Activated T-helper 1 cell treated with anti-CD3 and anti-CD28 coated beads, Interleukin-12 subunit alpha, Interleukin-12 subunit beta, Interleukin-2, Interleukin-4 antibody, amounts not matched to agents 30 ng/mL and 10 ng/mL and 1 ng/mL, durations not matched to agents 14 hours and 24 hours and 36 hours (primary cell): ENCODE measurements at regions of chr4 and their contacts with region 1.

Region 1: GRCh38 chr4:122922877-122923511 is 597 bp upstream of the NUDT6 start:
- DNase-seq: peak; percentile 90
- H3K4me3 Mint-ChIP-seq: no peak overlapping the region
- H3K27ac Mint-ChIP-seq: peak overlapping the region; percentile 96
- H3K4me1 Mint-ChIP-seq: peaks cover 16% of the 10 kb centered on the region
- H3K27me3 Mint-ChIP-seq: no peaks in the 10 kb centered on the region

Region 2: DNA sequence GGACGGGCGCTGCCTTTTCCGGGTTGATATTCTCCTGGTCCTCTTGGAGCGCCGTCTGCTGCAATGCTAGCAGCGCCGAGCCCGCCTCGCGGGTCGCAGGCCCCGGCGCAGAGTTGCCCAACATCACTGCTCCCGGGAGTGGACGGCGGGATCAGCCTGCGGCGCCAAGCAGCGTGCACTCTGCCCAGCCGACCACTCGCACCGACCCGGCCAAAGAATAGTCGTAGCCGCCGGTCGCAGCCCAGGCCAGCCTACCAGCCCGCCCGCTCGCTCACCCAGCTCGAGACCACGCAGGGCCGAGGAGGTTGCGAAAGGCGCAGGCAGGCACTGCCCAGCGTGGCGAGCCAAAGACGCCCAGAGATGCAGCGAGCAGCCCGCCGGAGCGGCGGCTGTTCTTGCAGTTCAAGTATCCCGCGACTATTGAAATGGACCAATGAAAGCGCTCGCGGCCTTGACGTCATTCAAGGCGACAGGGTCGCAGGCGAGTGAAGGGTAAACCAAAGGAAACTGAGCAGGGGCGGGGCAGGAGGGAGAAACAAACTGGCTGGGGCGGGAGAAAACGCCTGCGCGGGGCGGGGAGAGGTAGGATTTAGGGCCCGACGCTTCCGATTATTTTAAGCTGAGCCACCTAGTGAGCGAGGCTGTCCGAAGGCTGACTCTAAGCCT is 1099.4 kb before region 1 on chr4 and contains the start of gene CCNA2:
- intact Hi-C with region 1: loop called (anchors 2 kb)
- DNase-seq: peak; percentile 95
- H3K4me3 Mint-ChIP-seq: peak within 1 kb of the TSS; percentile 94
- H3K27ac Mint-ChIP-seq: peak within 1 kb of the TSS; percentile 91
- H3K4me1 Mint-ChIP-seq: peaks cover 45% of the 10 kb centered on the region
- H3K27me3 Mint-ChIP-seq: no peaks in the 10 kb centered on the region
- total RNA-seq, gene CCNA2: 59.9 and 64.3 TPM in 2 replicates

Region 3: GRCh38 chr4:122329876-122330565 is 593.0 kb before region 1 on chr4:
- intact Hi-C with region 1: loop called (anchors 10 kb)
- DNase-seq: no peak
- H3K4me3 Mint-ChIP-seq: no peak overlapping the region
- H3K27ac Mint-ChIP-seq: no peak overlapping the region
- H3K4me1 Mint-ChIP-seq: peaks cover 11% of the 10 kb centered on the region
- H3K27me3 Mint-ChIP-seq: no peaks in the 10 kb centered on the region

Region 4: GRCh38 chr4:122602277-122603142 is 320.5 kb before region 1 on chr4:
- intact Hi-C with region 1: loop called (anchors 2 kb)
- DNase-seq: no peak
- H3K4me3 Mint-ChIP-seq: peak overlapping the region; percentile 54
- H3K27ac Mint-ChIP-seq: peak overlapping the region; percentile 55
- H3K4me1 Mint-ChIP-seq: peaks cover 43% of the 10 kb centered on the region
- H3K27me3 Mint-ChIP-seq: no peaks in the 10 kb centered on the region

Region 5: DNA sequence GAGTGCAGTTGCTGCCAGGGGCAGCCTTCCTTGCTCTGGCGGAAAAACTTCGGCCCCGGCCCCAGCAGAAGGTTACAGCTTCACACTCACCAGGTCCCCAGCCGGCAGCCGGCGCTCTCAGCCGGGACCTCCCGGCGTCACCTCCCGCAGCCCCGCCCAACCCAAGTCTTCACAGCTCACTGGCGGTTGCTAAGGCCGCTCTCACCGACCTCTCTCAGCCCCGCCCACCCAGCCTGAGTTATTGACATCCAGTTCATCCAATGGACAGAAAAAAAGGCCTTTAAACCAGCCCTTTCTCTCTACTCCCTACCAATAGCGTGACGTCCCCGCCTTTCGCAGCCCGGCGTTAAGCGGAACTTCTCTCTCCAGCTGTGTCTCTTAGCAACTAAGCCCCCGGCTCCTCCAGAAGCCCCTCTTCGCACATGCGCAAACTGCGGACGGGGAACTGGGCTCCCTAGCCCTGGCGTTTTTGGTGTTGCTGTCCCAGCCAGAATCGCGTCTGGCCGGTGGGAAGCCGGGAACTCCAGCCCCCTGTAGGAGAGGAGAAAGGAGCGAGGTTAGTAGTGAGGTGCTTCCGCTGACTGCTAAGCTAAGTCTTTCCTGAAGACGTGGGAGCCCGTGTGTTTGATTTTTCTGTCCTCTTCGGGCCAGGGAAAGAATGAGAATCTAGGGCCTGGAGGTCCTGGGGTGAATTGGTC is 190.5 kb before region 1 on chr4 and contains the start of gene BBS12:
- intact Hi-C with region 1: loop called (anchors 1 kb)
- DNase-seq: peak; percentile 98
- H3K4me3 Mint-ChIP-seq: peak within 1 kb of the TSS; percentile 94
- H3K27ac Mint-ChIP-seq: peak within 1 kb of the TSS; percentile 95
- H3K4me1 Mint-ChIP-seq: peaks cover 37% of the 10 kb centered on the region
- H3K27me3 Mint-ChIP-seq: no peaks in the 10 kb centered on the region
- total RNA-seq, gene BBS12: 4.4 and 6.2 TPM in 2 replicates

Region 6: DNA sequence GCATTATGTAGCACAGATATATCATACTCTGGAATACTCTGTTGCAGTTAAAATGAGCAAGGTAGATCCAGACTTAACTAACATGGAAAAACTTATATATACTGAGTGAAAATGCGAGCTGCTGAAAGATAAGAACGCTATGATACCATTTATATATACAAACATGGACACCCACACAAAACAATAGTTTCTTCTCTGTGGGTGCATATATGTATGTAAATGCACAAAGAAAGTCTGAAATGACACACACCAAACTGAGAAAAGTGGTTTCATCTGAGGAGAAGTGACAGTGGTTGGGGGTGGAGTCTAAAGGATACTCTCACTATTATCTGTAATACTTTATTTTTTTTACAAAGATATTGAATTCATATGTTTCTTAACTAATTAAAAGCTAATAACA is 108.6 kb before region 1 on chr4:
- intact Hi-C with region 1: loop called (anchors 1 kb)
- DNase-seq: no peak
- H3K4me3 Mint-ChIP-seq: no peak overlapping the region
- H3K27ac Mint-ChIP-seq: peak overlapping the region; percentile 38
- H3K4me1 Mint-ChIP-seq: peaks cover 12% of the 10 kb centered on the region
- H3K27me3 Mint-ChIP-seq: peaks cover 16% of the 10 kb centered on the region

Region 7: GRCh38 chr4:122963216-122963615 is 40.2 kb after region 1 on chr4:
- intact Hi-C with region 1: no loop called
- DNase-seq: no peak
- H3K4me3 Mint-ChIP-seq: no peak overlapping the region
- H3K27ac Mint-ChIP-seq: no peak overlapping the region
- H3K4me1 Mint-ChIP-seq: peaks cover 19% of the 10 kb centered on the region
- H3K27me3 Mint-ChIP-seq: no peaks in the 10 kb centered on the region

Region 8: DNA sequence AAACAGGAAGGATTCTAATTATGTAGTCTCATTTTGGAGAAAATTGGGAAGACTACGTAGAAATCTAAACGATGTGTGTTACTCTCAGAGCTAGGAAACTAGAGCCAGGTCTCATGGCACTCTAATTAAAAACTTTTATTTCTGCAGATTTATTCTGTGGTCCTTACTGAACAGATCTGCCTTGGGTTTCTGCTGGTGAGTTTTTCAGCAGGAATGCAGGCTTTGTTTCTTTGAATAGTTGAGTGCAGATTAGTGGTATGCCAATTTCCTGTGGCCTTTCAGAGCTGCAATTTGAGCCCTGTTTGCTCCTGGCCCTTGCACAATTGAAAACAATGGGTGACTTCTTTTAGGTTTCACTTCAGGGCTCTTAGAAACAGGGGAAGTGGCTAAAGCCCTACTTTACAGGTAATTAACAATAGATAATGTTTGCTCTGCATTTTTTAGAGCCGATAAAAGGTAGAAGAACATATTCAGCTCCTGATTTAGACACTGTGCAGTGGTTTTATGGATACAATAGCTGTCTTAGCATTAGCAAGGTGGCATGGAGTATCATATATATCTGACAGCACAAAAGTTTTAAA is 495.4 kb after region 1 on chr4:
- intact Hi-C with region 1: loop called (anchors 5 kb)
- DNase-seq: no peak
- H3K4me3 Mint-ChIP-seq: peak overlapping the region; percentile 25
- H3K27ac Mint-ChIP-seq: peak overlapping the region; percentile 64
- H3K4me1 Mint-ChIP-seq: peaks cover 82% of the 10 kb centered on the region
- H3K27me3 Mint-ChIP-seq: no peaks in the 10 kb centered on the region

Region 9: DNA sequence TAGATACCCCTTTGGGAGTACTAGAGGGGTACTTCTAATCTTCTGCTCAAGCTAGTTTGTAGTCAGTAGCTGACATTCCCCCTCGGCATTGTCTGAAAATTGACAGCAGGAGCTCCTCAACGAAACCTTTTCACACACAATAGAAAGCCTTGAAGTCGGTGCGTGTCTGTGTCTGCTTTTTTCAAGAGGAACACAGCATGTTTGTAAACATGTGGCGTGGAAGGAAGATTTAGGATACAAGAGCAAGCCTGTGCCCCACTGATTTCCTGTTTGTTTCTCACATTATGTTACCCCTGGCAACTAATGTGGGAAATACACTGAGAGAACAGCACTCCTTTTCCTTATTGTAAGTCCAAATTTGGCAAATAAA is 1536.9 kb after region 1 on chr4:
- intact Hi-C with region 1: no loop called
- DNase-seq: no peak
- H3K4me3 Mint-ChIP-seq: no peak overlapping the region
- H3K27ac Mint-ChIP-seq: no peak overlapping the region
- H3K4me1 Mint-ChIP-seq: no peaks in the 10 kb centered on the region
- H3K27me3 Mint-ChIP-seq: no peaks in the 10 kb centered on the region